Aorta (tissue), 5 donors: ENCODE measurements at regions of chr4 and their contacts with region 1.

Region 1: DNA sequence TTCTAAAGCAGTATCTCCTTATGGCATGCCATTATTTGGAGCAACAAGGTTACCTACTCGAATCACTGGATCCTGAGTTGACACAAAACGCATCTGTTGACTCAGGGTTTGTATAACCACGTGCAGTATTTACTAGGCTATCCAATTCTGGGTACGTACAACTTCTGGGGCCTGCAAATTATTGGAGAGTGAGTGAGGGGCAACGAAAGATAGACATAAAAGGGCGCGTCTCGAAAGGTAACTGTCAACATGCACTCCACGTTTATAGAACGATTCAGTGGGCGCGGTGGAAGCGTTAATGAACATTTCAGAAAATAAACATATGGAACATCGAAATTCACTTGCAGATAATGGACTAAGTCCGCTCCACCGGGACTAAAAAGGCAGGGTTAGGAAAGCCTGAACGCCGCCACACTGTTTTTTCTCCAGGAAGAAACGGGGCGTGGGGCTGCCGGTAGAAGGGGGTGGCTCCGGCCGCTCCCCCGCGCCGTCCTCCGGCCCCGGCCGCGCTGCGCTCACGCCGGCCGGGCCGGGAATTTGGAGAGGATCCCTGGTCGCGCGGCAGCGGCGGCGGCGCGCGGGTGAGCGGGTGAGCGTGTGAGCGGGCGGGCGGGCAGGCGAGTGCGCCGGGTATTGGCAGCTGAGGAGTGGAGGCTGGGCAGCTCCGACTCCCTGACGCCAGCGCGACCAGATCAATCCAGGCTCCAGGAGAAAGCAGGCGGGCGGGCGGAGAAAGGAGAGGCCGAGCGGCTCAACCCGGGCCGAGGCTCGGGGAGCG is at the start of gene SMAD1:
- DNase-seq: peak; percentile 89 to 94
- ATAC-seq: peak; percentile 93
- H3K4me3 ChIP-seq: peak within 1 kb of the TSS; percentile 70 to 86
- H3K27ac ChIP-seq: peak within 1 kb of the TSS; percentile 40 to 74
- H3K4me1 ChIP-seq: no peaks in the 10 kb centered on the region
- H3K27me3 ChIP-seq: no peaks in the 10 kb centered on the region
- total RNA-seq, gene SMAD1: 18.1 to 40.0 TPM

Region 2: GRCh38 chr4:145097821-145098674 is 383.3 kb before region 1 on chr4 and contains the starts of genes ABCE1 and ANAPC10:
- intact Hi-C with region 1: loop called in 1 of 2 experiments (anchors 10 kb)
- DNase-seq: peak; percentile 97 to 98
- ATAC-seq: peak; percentile 99
- H3K4me3 ChIP-seq: peak within 1 kb of the TSS; percentile 64 to 79
- H3K27ac ChIP-seq: peak within 1 kb of the TSS; percentile 73 to 76
- H3K4me1 ChIP-seq: peaks cover 2% of the 10 kb centered on the region in 2 donors
- H3K27me3 ChIP-seq: no peaks in the 10 kb centered on the region
- total RNA-seq, gene ABCE1: 39.2 to 43.9 TPM
- total RNA-seq, gene ANAPC10: 20.2 to 22.8 TPM

Region 3: DNA sequence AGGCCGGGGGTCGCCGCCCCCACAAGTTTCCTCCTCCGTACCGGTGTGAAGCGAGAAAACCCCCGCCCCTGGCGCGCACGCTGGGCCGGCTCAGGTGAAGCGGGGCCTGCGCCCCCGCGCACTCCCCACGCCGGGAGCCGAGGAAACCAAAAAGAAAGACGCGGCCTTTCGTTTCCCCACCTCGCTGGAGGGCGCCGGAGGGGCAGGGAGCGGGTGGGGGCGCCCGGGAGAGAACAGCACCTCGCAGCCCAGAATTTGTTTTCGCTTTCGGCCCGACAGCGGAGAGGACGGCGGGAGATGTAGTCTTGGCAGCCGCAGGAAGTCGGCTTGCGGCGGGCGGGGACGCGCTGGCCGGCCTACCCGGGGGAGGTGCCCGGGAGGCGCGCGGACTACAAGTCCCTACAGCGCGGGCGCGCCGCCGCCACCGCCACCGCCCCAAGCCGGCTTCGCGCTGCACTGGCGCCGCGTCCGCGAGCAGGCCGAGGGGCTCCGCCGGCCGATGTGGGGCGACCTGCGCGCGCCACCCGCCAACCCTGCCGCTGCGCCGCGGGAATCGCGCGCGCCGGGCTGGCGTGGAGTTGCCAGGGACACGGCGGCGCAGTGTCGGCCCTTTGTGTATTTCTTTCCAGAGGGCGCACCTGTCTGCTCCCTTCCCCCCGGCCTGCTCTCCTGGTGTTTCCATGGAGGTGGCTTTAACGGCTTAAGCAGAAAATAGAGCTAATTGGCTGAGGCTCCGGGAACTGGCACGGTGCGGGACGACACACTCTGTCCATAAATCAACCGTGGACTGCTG is 300.9 kb before region 1 on chr4 and contains the start of gene OTUD4:
- intact Hi-C with region 1: loop called (anchors 5 to 10 kb)
- DNase-seq: peak; percentile 97 to 98
- ATAC-seq: peak; percentile 97
- H3K4me3 ChIP-seq: peak within 1 kb of the TSS; percentile 67 to 84
- H3K27ac ChIP-seq: peak within 1 kb of the TSS; percentile 62 to 77
- H3K4me1 ChIP-seq: peaks cover 3 to 4% of the 10 kb centered on the region in 2 donors
- H3K27me3 ChIP-seq: no peaks in the 10 kb centered on the region
- total RNA-seq, gene OTUD4: 36.9 to 48.7 TPM

Region 4: DNA sequence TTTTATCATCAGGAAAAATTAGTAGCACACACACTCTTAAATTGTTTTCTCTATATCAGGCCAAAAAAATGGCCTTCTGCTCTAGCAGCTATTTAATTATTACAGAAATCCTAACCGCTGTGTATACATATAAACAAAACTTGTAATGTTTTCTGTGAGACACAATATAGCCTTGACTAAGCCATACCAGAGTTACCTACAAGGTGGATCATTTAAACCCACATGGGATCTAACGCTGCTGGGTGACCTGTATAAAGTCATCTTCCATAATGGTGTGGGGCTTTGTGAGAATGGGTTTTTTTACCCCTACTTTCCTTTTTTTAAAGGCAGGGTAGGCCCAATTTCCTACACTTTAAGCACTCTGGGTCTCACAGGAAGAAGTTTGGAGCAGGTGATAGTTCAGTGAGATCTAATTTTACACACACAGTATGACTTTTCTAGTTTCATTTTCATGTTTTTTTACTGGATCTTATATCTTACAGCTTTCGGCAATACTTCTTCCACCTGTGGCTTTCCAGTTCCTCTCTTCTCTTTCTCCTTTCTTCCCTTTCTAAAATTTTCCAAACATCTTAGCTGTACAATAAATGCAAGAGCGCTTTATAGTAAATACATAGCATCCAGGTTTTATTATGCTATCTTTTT is 70.9 kb after region 1 on chr4:
- intact Hi-C with region 1: loop called in 1 of 2 experiments (anchors 5 kb)
- DNase-seq: no peak
- ATAC-seq: no peak
- H3K4me3 ChIP-seq: no peak overlapping the region
- H3K27ac ChIP-seq: no peak overlapping the region
- H3K4me1 ChIP-seq: no peaks in the 10 kb centered on the region
- H3K27me3 ChIP-seq: no peaks in the 10 kb centered on the region